ENCODE measurements at regions of chr3 and their contacts with region 1.

Region 1: GRCh38 chr3:137032465-137033120 is 74.8 kb downstream of the IL20RB start:
- DNase-seq: peak; percentile 83
- CTCF ChIP-seq: peak; percentile 94

Region 2: DNA sequence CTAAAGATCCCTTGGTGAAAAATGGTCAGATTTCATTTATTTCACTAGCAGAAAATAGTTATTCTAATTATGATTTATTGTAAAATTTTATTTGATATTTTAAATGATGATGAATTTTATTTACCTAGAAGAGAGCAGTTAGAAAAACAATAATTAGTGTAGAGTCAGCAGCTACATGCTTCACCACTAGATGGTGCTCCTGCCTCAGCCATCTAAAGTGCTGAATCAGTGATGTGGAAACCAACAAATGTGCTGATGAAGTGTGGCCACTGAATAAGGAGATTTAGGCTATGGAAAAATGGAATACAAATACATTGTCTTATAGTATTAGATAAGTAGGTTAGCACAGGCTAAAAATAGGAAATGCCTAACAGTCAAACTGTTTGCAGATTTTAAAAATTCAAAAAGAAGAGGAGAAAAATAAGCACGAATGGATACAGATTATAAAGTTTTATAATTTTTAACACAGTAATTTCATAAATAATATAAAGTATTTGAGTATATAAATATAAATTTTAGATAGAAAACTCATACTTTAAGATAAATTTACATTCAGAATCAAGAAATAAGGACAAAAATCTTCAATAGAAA is 957.3 kb before region 1 on chr3:
- CTCF ChIA-PET with region 1: interaction called, 16 read pairs
- POLR2A ChIA-PET with region 1: no interaction called
- DNase-seq: peak; percentile 49
- CTCF ChIP-seq: peak; percentile 93

Region 3: DNA sequence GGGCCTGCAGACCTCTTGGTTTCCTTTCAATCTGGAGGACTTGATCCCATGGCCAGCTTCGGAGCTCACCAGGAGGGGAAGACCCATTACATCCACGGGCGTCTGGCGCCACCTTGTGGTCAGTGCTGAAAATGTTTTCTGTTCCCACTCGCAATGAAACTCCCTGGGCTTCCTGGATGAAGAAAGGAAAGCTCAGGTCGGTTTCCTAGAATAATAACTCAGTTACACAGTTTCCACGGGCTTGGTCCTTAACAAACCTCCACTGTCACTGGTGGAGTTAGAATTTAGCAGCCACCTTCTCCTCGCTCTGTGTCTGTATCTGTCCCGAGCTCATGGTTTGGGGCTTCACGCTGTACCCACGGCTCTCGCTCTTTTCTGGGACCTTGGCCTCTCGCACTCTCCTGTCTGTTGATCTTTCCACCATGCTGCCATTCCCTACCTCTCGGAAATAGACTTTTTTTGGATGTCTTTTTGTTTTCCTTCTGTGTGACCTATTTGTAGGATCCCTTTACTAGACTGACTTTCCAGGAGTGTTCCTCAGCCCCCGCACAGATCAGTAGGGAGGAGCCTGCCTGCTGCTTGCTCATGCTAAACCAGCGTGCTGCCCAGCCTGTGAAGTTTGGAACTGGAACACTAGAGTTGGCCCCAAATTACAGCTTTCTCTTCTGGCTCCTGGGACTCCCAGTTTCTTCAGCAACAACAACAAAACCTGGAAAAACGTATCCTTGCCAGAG is 18.5 kb before region 1 on chr3:
- CTCF ChIA-PET with region 1: interaction called, 54 read pairs
- POLR2A ChIA-PET with region 1: no interaction called
- DNase-seq: peak; percentile 82
- CTCF ChIP-seq: peak; percentile 78

Region 4: GRCh38 chr3:137047240-137047639 is 14.6 kb after region 1 on chr3:
- CTCF ChIA-PET with region 1: interaction called, 32 read pairs
- POLR2A ChIA-PET with region 1: no interaction called
- DNase-seq: no peak
- CTCF ChIP-seq: no peak

Region 5: DNA sequence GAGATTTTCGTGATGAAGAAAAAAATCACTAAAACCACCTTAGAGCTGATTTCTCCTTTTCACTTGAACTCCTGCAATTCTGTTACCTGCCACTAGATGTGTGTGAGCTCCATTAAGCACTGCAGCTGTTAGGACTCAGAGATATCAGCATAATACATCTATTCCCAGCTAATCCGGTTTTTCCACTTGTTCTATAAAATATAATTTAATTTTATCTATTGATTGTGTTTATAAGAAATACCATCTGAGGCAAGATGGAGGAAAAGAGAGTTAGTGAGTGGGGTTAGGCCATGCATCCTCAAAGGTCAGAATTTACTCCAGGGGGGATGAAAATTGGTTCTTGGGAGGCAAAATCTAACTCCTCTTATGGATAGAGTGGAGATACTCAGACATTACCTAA is 77.9 kb after region 1 on chr3:
- CTCF ChIA-PET with region 1: interaction called, 10 read pairs
- POLR2A ChIA-PET with region 1: no interaction called
- DNase-seq: peak; percentile 46
- CTCF ChIP-seq: peak; percentile 49

Measured in GM10248 (cell line).